ENCODE measurements at regions of chr3 and their contacts with region 1.

Region 1: DNA sequence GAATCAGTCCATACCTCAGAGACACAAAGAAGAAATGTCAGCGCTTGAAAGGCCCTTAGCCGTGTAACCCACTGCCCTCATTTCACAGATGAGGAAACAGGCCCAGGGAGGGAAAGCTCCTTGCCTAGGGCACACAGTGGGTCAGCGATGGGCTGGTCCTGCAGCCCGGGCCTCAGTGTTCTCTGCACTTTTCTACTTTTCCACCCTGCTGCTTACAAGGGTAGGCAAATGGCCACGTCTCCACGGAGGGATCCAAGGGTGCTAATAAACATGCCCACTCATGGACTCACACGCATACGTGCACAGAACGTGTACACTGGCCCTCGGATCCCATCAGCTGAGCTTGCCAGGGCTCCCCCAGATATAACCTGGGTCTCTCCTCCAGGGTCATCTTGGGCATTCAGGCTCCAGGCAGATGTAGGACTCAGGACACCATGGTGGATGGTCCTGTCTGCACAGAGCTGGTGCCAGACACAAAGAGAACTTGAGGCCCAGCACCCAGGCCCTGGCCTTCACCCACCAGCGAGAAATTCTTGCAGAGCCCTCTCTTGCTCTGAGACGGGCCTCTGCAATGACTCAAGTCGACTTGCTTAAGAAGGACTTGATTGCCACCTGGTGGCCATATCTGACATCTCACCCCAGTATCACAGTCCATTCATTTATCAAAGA is 34.5 kb upstream of the VPS8 start:
- DNase-seq: peak; percentile 66
- ATAC-seq: peak; percentile 91
- H3K4me3 Mint-ChIP-seq: no peak overlapping the region
- H3K27ac Mint-ChIP-seq: no peak overlapping the region
- H3K4me1 Mint-ChIP-seq: peaks cover 5% of the 10 kb centered on the region
- H3K27me3 Mint-ChIP-seq: peaks cover 21% of the 10 kb centered on the region

Region 2: GRCh38 chr3:184561061-184561912 is 216.2 kb before region 1 on chr3 and contains the start of gene EPHB3:
- POLR2A ChIA-PET with region 1: interaction called, 12 read pairs
- DNase-seq: peak; percentile 91
- ATAC-seq: peak; percentile 91
- H3K4me3 Mint-ChIP-seq: peak within 1 kb of the TSS; percentile 69
- H3K27ac Mint-ChIP-seq: no peak within 1 kb of the TSS
- H3K4me1 Mint-ChIP-seq: peaks cover 11% of the 10 kb centered on the region
- H3K27me3 Mint-ChIP-seq: peaks cover 59% of the 10 kb centered on the region
- total RNA-seq, gene EPHB3: 0.25 TPM in 1 of 2 experiments, not detected in the other

Region 3: GRCh38 chr3:184656829-184657681 is 120.4 kb before region 1 on chr3:
- POLR2A ChIA-PET with region 1: no interaction called
- DNase-seq: no peak
- ATAC-seq: no peak
- H3K4me3 Mint-ChIP-seq: no peak overlapping the region
- H3K27ac Mint-ChIP-seq: no peak overlapping the region
- H3K4me1 Mint-ChIP-seq: peaks cover 3% of the 10 kb centered on the region
- H3K27me3 Mint-ChIP-seq: peaks cover 13% of the 10 kb centered on the region

Measured in activated naive CD8-positive, alpha-beta T cell treated with anti-CD3 and anti-CD28 coated beads, Interleukin-2, amount 10 ng/mL, durations not matched to agents 7 days and 5 days (primary cell).